Left cardiac atrium (tissue), 4 donors: ENCODE measurements at regions of chrX and their contacts with region 1.

Region 1: GRCh38 chrX:40153335-40154249 is 55.8 kb upstream of the BCOR start:
- DNase-seq: peak; percentile 58
- ATAC-seq: peak; percentile 9 to 17

Region 2: GRCh38 chrX:39730662-39731397 is 422.8 kb before region 1 on chrX:
- intact Hi-C with region 1: loop called in 1 of 2 experiments (anchors 10 kb)
- DNase-seq: peak; percentile 80
- ATAC-seq: peak; percentile 80 to 84

Region 3: GRCh38 chrX:39814391-39814790 is 339.2 kb before region 1 on chrX:
- intact Hi-C with region 1: loop called in 1 of 2 experiments (anchors 5 kb)
- DNase-seq: peak; percentile 37
- ATAC-seq: peak in 1 of 2 donors; percentile 10

Region 4: GRCh38 chrX:40108959-40109287 is 44.7 kb before region 1 on chrX:
- intact Hi-C with region 1: loop called (anchors 5 kb)
- DNase-seq: peak; percentile 84
- ATAC-seq: peak; percentile 51 to 71